HCT116 (cell line): ENCODE measurements at regions of chr11 and their contacts with region 1.

Region 1: DNA sequence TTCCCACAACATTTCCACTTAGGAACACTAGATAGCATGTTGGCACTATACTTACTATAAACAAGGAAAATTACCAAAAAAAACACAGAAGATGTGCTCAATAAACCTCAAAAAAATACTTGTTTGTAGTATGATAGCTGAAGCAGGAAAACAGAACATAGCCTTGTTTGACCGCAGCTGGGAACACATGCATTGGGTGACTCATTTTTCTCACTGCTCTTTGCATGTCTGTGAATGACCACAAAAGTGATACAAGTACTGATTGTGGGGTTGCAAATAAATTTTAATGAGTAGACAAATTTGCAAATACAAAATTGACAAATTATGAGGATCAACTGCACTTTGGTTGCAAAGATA is 22.8 kb upstream of the GUCY1A2 start:
- DNase-seq: no peak
- ATAC-seq: no peak
- H3K4me3 ChIP-seq: no peak overlapping the region
- H3K27ac ChIP-seq: no peak overlapping the region
- H3K4me1 ChIP-seq: no peaks in the 10 kb centered on the region
- H3K27me3 ChIP-seq: no peaks in the 10 kb centered on the region
- CTCF ChIP-seq: no peak
- POLR2A ChIP-seq: no peak
- RAD21 ChIP-seq: no peak

Region 2: GRCh38 chr11:106087815-106088435 is 953.1 kb before region 1 on chr11:
- CTCF ChIA-PET with region 1: no interaction called
- POLR2A ChIA-PET with region 1: no interaction called
- RAD21 ChIA-PET with region 1: no interaction called
- intact Hi-C with region 1: loop called (anchors 2 kb)
- DNase-seq: peak; percentile 33
- ATAC-seq: peak; percentile 80
- H3K4me3 ChIP-seq: no peak overlapping the region
- H3K27ac ChIP-seq: no peak overlapping the region
- H3K4me1 ChIP-seq: no peaks in the 10 kb centered on the region
- H3K27me3 ChIP-seq: no peaks in the 10 kb centered on the region
- CTCF ChIP-seq: peak; percentile 41 to 95 (median 78); a peak in 5 of 6 replicates
- POLR2A ChIP-seq: no peak
- RAD21 ChIP-seq: peak; percentile 70

Region 3: GRCh38 chr11:106156290-106156937 is 884.7 kb before region 1 on chr11:
- CTCF ChIA-PET with region 1: interaction called, 3 read pairs
- POLR2A ChIA-PET with region 1: no interaction called
- RAD21 ChIA-PET with region 1: no interaction called
- intact Hi-C with region 1: loop called (anchors 2 kb)
- DNase-seq: peak; percentile 26
- ATAC-seq: peak; percentile 73
- H3K4me3 ChIP-seq: no peak overlapping the region
- H3K27ac ChIP-seq: no peak overlapping the region
- H3K4me1 ChIP-seq: no peaks in the 10 kb centered on the region
- H3K27me3 ChIP-seq: no peaks in the 10 kb centered on the region
- CTCF ChIP-seq: peak; percentile 29 to 64 (median 44); a peak in 5 of 6 replicates
- POLR2A ChIP-seq: no peak
- RAD21 ChIP-seq: peak; percentile 61

Region 4: DNA sequence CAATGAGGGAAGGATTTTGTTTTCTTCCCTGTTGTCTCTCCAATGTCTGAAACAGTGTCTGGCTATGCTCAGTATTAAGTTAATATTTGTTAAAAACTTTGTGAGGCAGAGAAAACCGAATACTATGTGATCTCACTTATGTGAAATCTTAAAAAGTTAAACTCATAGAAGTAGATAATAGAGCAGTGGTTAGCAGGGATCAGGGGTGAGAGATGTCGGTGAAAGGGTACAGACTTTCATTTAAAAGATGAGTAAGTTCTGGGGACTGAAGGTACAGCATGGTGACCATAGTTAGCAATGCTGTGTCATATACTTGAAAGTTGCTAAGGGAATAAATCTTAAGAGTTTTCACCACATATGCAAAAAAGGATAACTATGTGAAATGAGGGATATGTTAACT is 719.0 kb before region 1 on chr11:
- CTCF ChIA-PET with region 1: interaction called, 7 read pairs
- POLR2A ChIA-PET with region 1: no interaction called
- RAD21 ChIA-PET with region 1: no interaction called
- intact Hi-C with region 1: loop called (anchors 1 kb)
- DNase-seq: no peak
- ATAC-seq: no peak
- H3K4me3 ChIP-seq: no peak overlapping the region
- H3K27ac ChIP-seq: no peak overlapping the region
- H3K4me1 ChIP-seq: no peaks in the 10 kb centered on the region
- H3K27me3 ChIP-seq: no peaks in the 10 kb centered on the region; the same call in 1 of the 2 replicates
- CTCF ChIP-seq: no peak
- POLR2A ChIP-seq: no peak
- RAD21 ChIP-seq: no peak

Region 5: GRCh38 chr11:106724293-106724892 is 316.7 kb before region 1 on chr11:
- CTCF ChIA-PET with region 1: no interaction called
- POLR2A ChIA-PET with region 1: no interaction called
- RAD21 ChIA-PET with region 1: no interaction called
- intact Hi-C with region 1: loop called (anchors 1 kb)
- DNase-seq: no peak
- ATAC-seq: no peak
- H3K4me3 ChIP-seq: no peak overlapping the region
- H3K27ac ChIP-seq: no peak overlapping the region
- H3K4me1 ChIP-seq: no peaks in the 10 kb centered on the region
- H3K27me3 ChIP-seq: no peaks in the 10 kb centered on the region
- CTCF ChIP-seq: no peak
- POLR2A ChIP-seq: no peak
- RAD21 ChIP-seq: no peak